GM10248 (cell line): ENCODE measurements at regions of chr2 and their contacts with region 1.

Region 1: DNA sequence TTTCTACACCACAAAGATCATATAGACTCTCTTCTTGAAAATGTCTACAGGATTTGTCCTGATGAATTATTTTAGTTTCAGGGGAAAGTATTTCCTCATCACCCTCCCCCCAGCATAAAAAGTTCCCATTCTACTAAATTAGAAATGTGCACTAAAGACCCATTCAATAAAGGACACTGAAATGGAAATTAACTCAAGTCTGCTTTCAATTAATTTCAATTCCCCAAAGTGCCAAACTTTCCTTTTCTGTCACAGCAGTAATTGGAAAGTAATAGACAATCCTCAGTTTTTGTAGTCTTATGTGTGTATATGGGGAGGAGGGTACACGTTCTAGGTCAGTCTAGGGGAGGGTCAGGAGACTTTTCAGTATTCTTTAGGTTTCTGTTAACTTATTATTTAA is 21.5 kb downstream of the ARHGEF33 start:
- DNase-seq: no peak
- CTCF ChIP-seq: no peak

Region 2: DNA sequence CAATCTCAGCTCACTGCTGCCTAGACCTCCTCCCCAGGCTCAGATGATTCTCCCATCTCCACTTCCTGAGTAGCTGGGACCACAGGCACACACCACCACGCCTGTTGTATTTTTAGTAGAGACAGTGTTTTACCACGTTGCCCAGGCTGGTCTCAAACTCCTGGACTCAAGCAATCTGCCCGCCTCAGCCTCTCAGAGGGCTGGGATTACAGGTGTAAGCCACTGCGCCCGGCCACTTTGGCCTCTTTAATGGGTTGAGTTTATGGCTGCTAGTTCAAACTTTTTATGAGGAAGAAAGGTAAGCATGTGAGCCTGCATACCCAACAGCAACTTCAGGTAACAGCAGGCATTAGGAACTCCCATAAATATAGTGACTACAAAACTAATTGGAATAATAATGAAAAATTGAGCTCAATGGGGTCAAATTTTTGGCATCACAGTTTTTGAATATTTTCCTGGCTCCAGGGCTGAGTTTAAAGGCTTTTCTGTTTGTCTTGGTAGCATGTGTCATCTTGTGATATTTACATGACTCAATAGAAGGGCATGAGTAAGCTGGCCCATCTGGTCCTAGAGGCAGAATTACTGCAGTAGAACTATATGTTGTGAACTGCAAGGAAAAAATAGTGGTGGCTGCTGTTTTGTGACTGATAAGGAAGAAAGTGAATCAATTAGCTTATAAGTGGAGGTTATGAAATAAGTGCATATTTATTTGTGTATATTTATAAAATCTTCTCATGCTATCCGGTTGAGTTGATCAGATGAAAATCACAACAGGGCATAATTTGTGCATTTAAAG is 220.5 kb before region 1 on chr2:
- CTCF ChIA-PET with region 1: no interaction called
- POLR2A ChIA-PET with region 1: no interaction called
- DNase-seq: no peak
- CTCF ChIP-seq: no peak

Region 3: GRCh38 chr2:38898256-38898655 is 12.9 kb before region 1 on chr2:
- CTCF ChIA-PET with region 1: interaction called, 21 read pairs
- POLR2A ChIA-PET with region 1: no interaction called
- DNase-seq: no peak
- CTCF ChIP-seq: no peak